ENCODE measurements at regions of chr12 and their contacts with region 1.

Region 1: DNA sequence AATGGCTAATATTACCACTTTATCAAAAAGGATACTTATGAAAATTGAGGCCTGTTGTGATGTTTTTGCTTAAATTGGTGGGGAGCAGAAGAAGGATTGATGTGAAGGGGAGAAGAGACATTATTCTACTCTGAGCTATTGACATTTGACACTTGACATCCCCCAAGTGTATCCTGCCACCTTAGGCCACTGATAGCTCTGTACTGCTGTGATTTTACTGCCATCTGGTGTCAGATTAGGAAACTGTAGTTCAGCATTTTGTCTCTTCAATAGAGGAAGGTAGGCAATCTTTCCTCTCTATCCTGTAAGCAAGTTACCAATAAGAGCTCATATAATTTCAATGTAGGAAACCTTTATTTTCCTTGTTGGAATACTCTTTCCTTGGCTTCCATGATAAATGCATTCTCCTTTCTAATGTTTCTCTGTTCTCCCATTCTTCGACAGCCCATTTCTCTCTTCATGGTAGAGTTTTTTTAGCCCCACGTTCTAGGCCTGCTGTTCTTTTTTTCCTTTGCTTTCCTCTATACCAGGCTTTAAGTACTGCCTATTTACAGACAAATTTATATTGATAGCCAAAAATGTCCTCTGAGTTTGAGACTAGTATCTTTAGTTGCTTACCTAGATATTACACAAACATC is 46.3 kb downstream of the PPHLN1 start:
- DNase-seq: peak; percentile 36 to 76 (median 46)
- ATAC-seq: peak; percentile 97
- H3K4me3 ChIP-seq: no peak overlapping the region
- H3K27ac ChIP-seq: no peak overlapping the region
- H3K4me1 ChIP-seq: no peaks in the 10 kb centered on the region
- H3K27me3 ChIP-seq: no peaks in the 10 kb centered on the region
- CTCF ChIP-seq: peak; percentile 72 to 89 (median 87)
- EP300 ChIP-seq: no peak
- POLR2A ChIP-seq: no peak
- RAD21 ChIP-seq: peak; percentile 83 to 92

Region 2: DNA sequence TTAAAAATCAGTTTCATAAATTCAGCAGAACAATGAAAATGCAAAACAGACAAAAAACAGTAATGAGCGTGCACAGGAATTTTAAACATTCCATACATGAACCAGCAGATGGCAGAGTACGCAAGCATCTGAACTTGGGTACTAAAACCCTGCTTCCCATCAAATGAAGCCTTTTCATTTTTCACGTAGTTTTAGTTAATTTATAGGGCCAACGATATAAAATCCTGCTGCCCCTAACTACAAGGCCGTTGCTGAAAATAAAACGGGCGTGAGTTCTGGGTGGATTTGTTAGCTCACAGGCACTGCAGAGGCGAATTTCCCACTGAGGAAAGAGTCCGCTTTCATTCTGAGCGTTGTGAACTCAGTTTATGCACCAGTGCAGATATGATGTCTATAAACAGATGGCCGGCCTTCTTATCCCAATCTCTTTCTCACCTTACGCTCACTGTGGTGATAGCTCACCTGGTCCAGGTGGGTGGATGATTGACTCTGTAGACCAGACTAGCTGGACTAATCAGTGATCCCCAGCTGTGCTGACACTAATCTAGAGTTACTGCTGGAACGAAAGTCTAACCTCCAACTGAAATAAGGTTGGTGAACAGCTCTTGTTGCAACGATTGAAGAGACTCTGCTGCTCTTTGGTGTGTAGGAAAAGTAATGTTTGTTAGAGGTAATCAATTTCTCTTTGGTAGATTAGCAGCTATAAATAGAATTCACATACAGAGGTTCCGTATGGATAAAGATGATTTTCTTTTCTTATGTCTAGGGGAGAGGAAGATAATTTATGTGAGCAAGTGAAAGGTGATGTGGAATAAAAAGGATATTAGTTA is 1094.9 kb before region 1 on chr12:
- CTCF ChIA-PET with region 1: interaction called, 3 read pairs
- POLR2A ChIA-PET with region 1: no interaction called
- in situ Hi-C with region 1: no loop called
- intact Hi-C with region 1: loop called (anchors 10 kb)
- DNase-seq: peak; percentile 13 to 29 (median 22)
- ATAC-seq: no peak
- H3K4me3 ChIP-seq: no peak overlapping the region
- H3K27ac ChIP-seq: no peak overlapping the region
- H3K4me1 ChIP-seq: no peaks in the 10 kb centered on the region
- H3K27me3 ChIP-seq: no peaks in the 10 kb centered on the region
- CTCF ChIP-seq: peak in 2 of 3 experiments; percentile 43 to 57; a peak in 3 of 6 replicates
- EP300 ChIP-seq: no peak
- POLR2A ChIP-seq: no peak
- RAD21 ChIP-seq: peak; percentile 60 to 75

Region 3: GRCh38 chr12:42023733-42024494 is 348.4 kb before region 1 on chr12:
- CTCF ChIA-PET with region 1: no interaction called
- POLR2A ChIA-PET with region 1: no interaction called
- in situ Hi-C with region 1: no loop called
- intact Hi-C with region 1: loop called (anchors 2 kb)
- DNase-seq: peak; percentile 63 to 77 (median 66)
- ATAC-seq: peak; percentile 97
- H3K4me3 ChIP-seq: no peak overlapping the region
- H3K27ac ChIP-seq: no peak overlapping the region
- H3K4me1 ChIP-seq: no peaks in the 10 kb centered on the region
- H3K27me3 ChIP-seq: peaks cover 0 to 7% of the 10 kb centered on the region in 2 experiments; a peak in 1 of 5 replicates
- CTCF ChIP-seq: peak; percentile 83 to 96 (median 87)
- EP300 ChIP-seq: no peak
- POLR2A ChIP-seq: no peak
- RAD21 ChIP-seq: peak; percentile 77 to 87

Region 4: DNA sequence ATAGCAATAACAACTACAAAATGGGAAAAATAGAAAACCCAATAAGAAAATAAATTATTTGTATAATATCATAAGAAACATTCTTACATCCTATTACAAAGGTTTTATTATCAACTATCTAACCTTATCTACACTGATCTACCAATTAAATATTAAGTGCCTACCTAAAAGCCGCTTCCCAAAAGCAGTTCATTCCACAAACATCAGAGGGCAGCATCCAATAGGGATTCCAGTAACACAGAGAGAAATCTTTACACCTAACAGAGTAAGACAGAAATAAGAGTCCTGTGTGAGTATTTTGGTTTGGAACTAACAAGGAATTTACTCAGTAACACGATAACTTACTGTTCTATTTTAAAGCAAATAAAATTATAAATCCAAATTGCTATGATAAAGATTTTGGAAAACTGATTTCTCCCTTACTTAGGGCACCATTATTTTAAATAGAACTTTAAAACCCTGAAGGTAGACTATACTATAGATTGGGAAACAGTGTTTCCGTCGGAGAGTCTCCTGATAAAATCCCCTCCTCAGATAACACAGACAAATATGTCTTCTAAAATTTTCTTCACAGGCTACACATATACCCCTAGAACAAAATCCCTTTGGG is 242.6 kb before region 1 on chr12:
- CTCF ChIA-PET with region 1: interaction called, 25 read pairs
- POLR2A ChIA-PET with region 1: no interaction called
- in situ Hi-C with region 1: no loop called
- intact Hi-C with region 1: loop called (anchors 1 kb)
- DNase-seq: peak in 2 of 4 experiments; percentile 26 to 61
- ATAC-seq: peak; percentile 71
- H3K4me3 ChIP-seq: no peak overlapping the region
- H3K27ac ChIP-seq: no peak overlapping the region
- H3K4me1 ChIP-seq: peaks cover 0 to 2% of the 10 kb centered on the region in 2 experiments; a peak in 3 of 5 replicates
- H3K27me3 ChIP-seq: no peaks in the 10 kb centered on the region
- CTCF ChIP-seq: peak; percentile 61 to 79 (median 71); a peak in 5 of 6 replicates
- EP300 ChIP-seq: no peak
- POLR2A ChIP-seq: no peak
- RAD21 ChIP-seq: peak; percentile 89 to 93

Region 5: DNA sequence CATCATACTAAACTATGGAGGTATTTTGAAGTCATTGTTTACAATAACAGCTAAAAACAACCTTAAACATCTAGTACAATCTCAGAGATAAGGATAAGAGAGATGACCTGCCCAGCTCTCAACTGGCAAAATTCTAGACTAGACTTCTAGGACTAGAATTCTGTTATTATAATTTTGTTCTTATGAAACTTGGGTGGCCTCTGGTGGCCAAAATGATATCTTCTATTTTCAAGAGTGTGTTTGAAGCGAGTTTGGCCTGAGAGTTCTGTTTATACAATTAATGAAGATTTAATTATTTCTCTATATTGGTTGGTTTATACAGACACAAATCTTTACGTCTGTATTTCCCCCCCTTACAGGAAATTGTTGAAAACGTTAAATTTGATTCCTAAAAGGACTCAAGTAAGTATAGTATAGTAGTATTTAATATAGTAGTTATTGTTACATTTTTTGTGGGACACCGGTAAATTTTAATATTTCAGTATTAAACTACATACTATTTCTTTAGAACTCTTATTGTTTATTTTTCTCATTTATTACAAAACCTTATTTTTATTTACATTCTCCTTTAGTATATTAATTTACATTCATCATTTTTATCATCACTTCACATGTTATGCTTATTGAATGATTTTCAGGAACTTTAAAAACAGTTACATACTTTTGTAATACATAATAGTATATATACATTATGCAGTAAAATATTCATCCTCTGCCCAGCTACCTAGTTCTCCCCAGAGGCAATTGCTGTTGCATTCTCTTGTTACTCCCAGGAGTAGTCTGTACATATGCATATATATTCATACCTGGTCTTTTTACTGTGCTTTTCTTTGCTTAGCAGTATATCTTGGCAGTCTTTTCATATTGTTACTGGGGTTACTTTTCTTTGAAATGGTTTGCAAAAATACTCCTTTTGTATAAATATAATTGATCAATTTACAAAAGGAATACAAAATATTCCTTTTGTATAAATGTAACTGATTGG is 39.7 kb before region 1 on chr12:
- CTCF ChIA-PET with region 1: no interaction called
- POLR2A ChIA-PET with region 1: interaction called, 3 read pairs
- in situ Hi-C with region 1: no loop called
- intact Hi-C with region 1: loop called (anchors 1 kb)
- DNase-seq: peak in 2 of 4 experiments; percentile 42 to 65
- ATAC-seq: peak; percentile 81
- H3K4me3 ChIP-seq: no peak overlapping the region
- H3K27ac ChIP-seq: no peak overlapping the region
- H3K4me1 ChIP-seq: peaks cover 2 to 3% of the 10 kb centered on the region in 2 experiments
- H3K27me3 ChIP-seq: no peaks in the 10 kb centered on the region
- CTCF ChIP-seq: peak; percentile 41 to 72 (median 51); a peak in 5 of 6 replicates
- EP300 ChIP-seq: no peak
- POLR2A ChIP-seq: no peak
- RAD21 ChIP-seq: peak; percentile 78 to 83

Measured in K562 (cell line).